Heart left ventricle (tissue), 16 donors: ENCODE measurements at regions of chr5 and their contacts with region 1.

Region 1: GRCh38 chr5:50744776-50745175 is 78.3 kb downstream of the PARP8 start:
- DNase-seq: no peak
- ATAC-seq: peak in 1 of 4 donors; percentile 46
- H3K4me3 ChIP-seq: peak overlapping the region in 9 of 12 donors; percentile 24 to 47 (median 37)
- H3K27ac ChIP-seq: peak overlapping the region in 8 of 12 donors; percentile 1 to 71 (median 39)
- H3K4me1 ChIP-seq: peaks cover 0 to 42% (median 5%) of the 10 kb centered on the region in 12 donors
- H3K27me3 ChIP-seq: no peaks in the 10 kb centered on the region
- CTCF ChIP-seq: no peak
- POLR2A ChIP-seq: no peak

Region 2: DNA sequence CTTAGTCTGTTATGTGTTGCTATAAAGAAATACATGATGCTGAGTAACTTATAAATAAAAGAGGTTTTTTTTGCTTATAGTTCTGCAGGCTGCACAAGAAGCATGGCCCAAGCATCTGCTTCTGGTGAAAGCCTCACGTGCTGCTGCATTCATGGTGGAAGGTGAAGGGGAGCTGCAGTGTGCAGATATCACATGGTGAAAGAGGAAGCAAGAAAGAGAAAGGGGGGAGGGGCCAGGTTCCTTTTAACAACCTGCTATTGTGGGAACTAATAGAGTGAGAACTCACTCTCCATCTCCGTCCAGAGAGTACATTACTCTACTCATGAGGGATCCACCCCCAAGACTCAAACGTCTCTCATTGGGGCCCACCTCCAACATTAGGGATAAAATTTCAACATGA is 90.8 kb before region 1 on chr5:
- intact Hi-C with region 1: loop called in 1 of 10 experiments (anchors 10 kb)
- DNase-seq: peak in 1 of 5 donors; percentile 22
- ATAC-seq: peak in 1 of 4 donors; percentile 24
- H3K4me3 ChIP-seq: no peak overlapping the region
- H3K27ac ChIP-seq: no peak overlapping the region
- H3K4me1 ChIP-seq: peaks cover 0 to 8% (median 0%) of the 10 kb centered on the region in 12 donors
- H3K27me3 ChIP-seq: no peaks in the 10 kb centered on the region
- CTCF ChIP-seq: no peak
- POLR2A ChIP-seq: no peak

Region 3: DNA sequence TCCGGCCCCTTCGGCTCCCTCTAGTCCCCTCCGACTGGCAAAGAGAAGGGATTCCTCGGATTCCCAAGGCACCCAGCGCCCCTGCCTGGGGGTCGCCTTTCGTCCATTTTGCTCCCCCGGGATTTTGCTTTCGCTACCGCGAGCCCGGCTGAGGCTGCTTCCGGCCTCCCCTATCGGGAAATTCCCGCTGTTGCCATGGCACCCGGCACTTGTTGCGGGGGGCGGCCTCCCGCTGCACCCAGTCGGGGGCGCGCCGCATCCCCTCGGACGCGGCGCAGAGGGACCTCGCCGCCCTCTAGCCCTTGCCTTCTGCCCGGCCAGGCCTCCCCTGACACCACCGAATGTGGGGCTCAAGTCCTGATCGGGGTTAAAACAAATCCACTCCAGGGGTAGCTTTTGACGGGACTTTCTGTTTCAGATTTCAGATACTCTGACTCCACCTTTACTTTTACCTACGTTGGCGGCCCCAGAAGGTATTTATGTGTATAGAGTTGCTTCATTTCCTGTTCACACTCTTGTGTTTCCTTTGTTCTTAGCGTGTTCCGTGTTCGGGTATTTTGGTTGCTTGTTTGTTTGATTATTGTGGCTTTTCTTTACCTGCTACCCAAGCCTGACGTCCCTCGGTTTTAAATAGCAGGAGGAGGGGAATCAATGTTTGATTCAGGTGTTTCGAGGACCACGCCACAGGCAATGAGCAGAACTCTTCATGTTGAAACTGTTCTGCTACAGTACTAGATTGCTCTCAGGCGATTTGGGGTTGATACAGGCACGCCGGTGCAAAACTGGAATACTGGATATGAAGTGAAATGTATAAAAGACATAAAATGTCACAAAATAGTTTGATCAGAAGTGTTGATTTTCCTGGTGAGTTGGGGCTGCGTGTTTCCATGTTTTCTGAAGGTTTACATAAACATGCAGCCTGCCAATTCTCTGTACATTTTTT is 76.9 kb before region 1 on chr5:
- intact Hi-C with region 1: loop called in 6 of 10 experiments (anchors 5 to 10 kb)
- DNase-seq: peak; percentile 74 to 86 (median 75)
- ATAC-seq: peak in 3 of 4 donors; percentile 34 to 59 (median 55)
- H3K4me3 ChIP-seq: peak overlapping the region; percentile 47 to 98 (median 92)
- H3K27ac ChIP-seq: peak overlapping the region; percentile 55 to 98 (median 80)
- H3K4me1 ChIP-seq: peaks cover 0 to 73% (median 5%) of the 10 kb centered on the region in 12 donors
- H3K27me3 ChIP-seq: no peaks in the 10 kb centered on the region
- CTCF ChIP-seq: no peak
- POLR2A ChIP-seq: no peak